ENCODE measurements at regions of chr4 and their contacts with region 1.

Region 1: DNA sequence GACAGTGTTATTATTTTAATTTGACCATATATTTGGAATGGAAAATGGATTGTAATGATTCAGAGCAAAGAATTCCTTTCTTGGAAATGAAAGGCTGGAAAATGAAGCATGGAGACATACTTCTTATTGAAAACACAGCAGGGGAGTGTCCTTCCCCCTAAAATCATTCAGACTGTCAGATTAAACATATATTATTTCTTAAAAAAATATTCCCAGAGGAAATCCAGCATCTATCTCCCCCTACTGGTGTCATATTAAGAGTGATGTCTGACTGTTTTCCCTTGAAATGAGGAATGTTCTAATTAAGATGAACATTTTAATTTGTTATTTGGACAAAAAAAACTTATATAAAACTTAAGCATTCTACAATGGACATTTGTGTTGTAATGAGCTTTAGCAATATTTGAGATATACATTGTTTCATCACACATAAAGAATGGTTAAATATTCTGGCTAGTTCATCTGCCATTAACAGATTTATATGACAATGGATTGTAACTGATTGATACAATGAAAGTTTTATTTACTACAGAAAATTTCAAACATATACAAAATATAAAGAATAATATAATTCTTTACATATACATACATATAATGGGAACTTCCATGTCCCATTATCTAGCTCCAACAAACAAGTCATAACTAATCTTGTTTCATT is 264.6 kb downstream of the SPRY1 start:
- DNase-seq: no peak
- ATAC-seq: no peak
- H3K4me3 ChIP-seq: no peak overlapping the region
- H3K27ac ChIP-seq: no peak overlapping the region
- H3K4me1 ChIP-seq: peaks cover 0 to 5% (median 0%) of the 10 kb centered on the region in 12 donors
- H3K27me3 ChIP-seq: no peaks in the 10 kb centered on the region
- CTCF ChIP-seq: peak; percentile 32 to 68 (median 50)
- POLR2A ChIP-seq: no peak

Region 2: GRCh38 chr4:123564758-123565346 is 96.4 kb before region 1 on chr4:
- intact Hi-C with region 1: loop called in 5 of 10 experiments (anchors 2 to 10 kb)
- DNase-seq: peak in 3 of 5 donors; percentile 34 to 60 (median 46)
- ATAC-seq: peak; percentile 86 to 95 (median 92)
- H3K4me3 ChIP-seq: no peak overlapping the region
- H3K27ac ChIP-seq: no peak overlapping the region
- H3K4me1 ChIP-seq: peaks cover 0 to 14% (median 5%) of the 10 kb centered on the region in 12 donors
- H3K27me3 ChIP-seq: no peaks in the 10 kb centered on the region
- CTCF ChIP-seq: peak; percentile 63 to 87 (median 76)
- POLR2A ChIP-seq: no peak

Region 3: GRCh38 chr4:123689341-123689740 is 28.1 kb after region 1 on chr4:
- intact Hi-C with region 1: no loop called
- DNase-seq: no peak
- ATAC-seq: no peak
- H3K4me3 ChIP-seq: no peak overlapping the region
- H3K27ac ChIP-seq: no peak overlapping the region
- H3K4me1 ChIP-seq: no peaks in the 10 kb centered on the region
- H3K27me3 ChIP-seq: no peaks in the 10 kb centered on the region
- CTCF ChIP-seq: no peak
- POLR2A ChIP-seq: no peak

Measured in heart left ventricle (tissue), 16 donors.